Activated CD4-positive, alpha-beta T cell treated with anti-CD3 and anti-CD28 coated beads for 36 hours (primary cell): ENCODE measurements at regions of chrX and their contacts with region 1.

Region 1: GRCh38 chrX:45849253-45849862 is 648.7 kb upstream of the DIPK2B start:
- DNase-seq: peak; percentile 35
- ATAC-seq: no peak
- H3K4me3 Mint-ChIP-seq: peak overlapping the region; percentile 99
- H3K27ac Mint-ChIP-seq: peak overlapping the region; percentile 98
- H3K4me1 Mint-ChIP-seq: peaks cover 39% of the 10 kb centered on the region
- H3K27me3 Mint-ChIP-seq: no peaks in the 10 kb centered on the region

Region 2: GRCh38 chrX:45515262-45516215 is 333.8 kb before region 1 on chrX:
- CTCF ChIA-PET with region 1: no interaction called
- POLR2A ChIA-PET with region 1: no interaction called
- intact Hi-C with region 1: loop called in 1 of 2 experiments (anchors 5 kb)
- DNase-seq: peak; percentile 59
- ATAC-seq: peak; percentile 92
- H3K4me3 Mint-ChIP-seq: peak overlapping the region; percentile 43
- H3K27ac Mint-ChIP-seq: peak overlapping the region; percentile 39
- H3K4me1 Mint-ChIP-seq: peaks cover 23% of the 10 kb centered on the region
- H3K27me3 Mint-ChIP-seq: no peaks in the 10 kb centered on the region

Region 3: GRCh38 chrX:45557390-45557789 is 292.0 kb before region 1 on chrX:
- CTCF ChIA-PET with region 1: no interaction called
- POLR2A ChIA-PET with region 1: no interaction called
- intact Hi-C with region 1: no loop called
- DNase-seq: no peak
- ATAC-seq: no peak
- H3K4me3 Mint-ChIP-seq: no peak overlapping the region
- H3K27ac Mint-ChIP-seq: no peak overlapping the region
- H3K4me1 Mint-ChIP-seq: no peaks in the 10 kb centered on the region
- H3K27me3 Mint-ChIP-seq: no peaks in the 10 kb centered on the region

Region 4: GRCh38 chrX:45769761-45770582 is 79.4 kb before region 1 on chrX:
- CTCF ChIA-PET with region 1: no interaction called
- POLR2A ChIA-PET with region 1: interaction called, 5 read pairs
- intact Hi-C with region 1: loop called (anchors 1 to 2 kb)
- DNase-seq: peak; percentile 60
- ATAC-seq: peak; percentile 63
- H3K4me3 Mint-ChIP-seq: peak overlapping the region; percentile 77
- H3K27ac Mint-ChIP-seq: peak overlapping the region; percentile 98
- H3K4me1 Mint-ChIP-seq: peaks cover 53% of the 10 kb centered on the region
- H3K27me3 Mint-ChIP-seq: no peaks in the 10 kb centered on the region

Region 5: DNA sequence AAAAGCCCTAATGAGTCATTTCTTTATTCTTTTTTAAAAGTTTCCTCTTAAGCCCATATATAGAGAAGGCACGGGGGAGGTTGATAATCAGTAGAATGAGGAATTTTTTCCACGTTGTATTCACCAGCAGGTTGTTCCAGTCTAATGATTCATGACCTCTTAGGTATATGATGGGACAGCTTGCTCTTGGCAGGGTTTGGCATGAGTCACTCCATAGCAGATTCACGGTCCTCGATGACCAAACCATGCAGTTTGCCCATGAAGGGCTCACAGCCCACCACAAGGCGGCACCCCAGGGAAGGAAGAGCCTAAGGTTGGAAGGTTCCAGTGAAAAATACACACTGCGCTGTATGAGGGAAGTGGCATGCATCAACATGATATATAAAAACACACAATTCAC is 24.9 kb before region 1 on chrX:
- CTCF ChIA-PET with region 1: interaction called, 4 read pairs
- POLR2A ChIA-PET with region 1: interaction called, 3 read pairs
- intact Hi-C with region 1: loop called (anchors 1 kb)
- DNase-seq: peak; percentile 78
- ATAC-seq: peak; percentile 96
- H3K4me3 Mint-ChIP-seq: no peak overlapping the region
- H3K27ac Mint-ChIP-seq: peak overlapping the region; percentile 93
- H3K4me1 Mint-ChIP-seq: peaks cover 57% of the 10 kb centered on the region
- H3K27me3 Mint-ChIP-seq: no peaks in the 10 kb centered on the region

Region 6: DNA sequence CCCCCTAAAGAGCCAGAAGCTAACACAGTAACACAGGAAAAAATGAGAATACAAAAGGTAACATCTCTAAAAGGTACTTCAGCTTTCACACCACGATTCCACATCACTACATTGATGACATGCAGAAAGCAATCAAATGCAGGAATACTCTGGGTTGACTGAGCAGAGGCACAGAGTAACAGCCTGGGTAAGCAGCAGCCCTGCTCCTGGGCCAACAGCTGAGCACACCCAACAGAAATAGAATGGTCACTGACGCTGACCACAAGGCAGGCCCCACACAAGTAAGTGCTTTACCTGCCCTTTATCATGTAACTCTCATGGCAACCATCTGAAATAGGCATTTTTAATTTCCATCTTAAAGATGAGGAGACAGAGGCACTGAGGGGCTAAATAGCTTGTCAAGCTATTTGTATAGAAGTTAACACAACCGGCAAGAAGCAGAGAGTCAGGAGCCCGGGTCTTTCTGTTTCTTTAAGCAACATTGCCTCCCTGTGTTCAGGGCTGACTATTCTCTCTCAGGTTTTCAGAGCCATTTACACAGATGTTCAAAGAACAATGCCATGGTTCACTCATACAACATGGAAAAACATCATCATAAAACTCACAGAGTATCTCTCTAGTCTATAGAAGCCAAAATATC is 527.0 kb after region 1 on chrX:
- CTCF ChIA-PET with region 1: no interaction called
- POLR2A ChIA-PET with region 1: no interaction called
- intact Hi-C with region 1: loop called (anchors 2 to 10 kb)
- DNase-seq: peak; percentile 52
- ATAC-seq: peak; percentile 97
- H3K4me3 Mint-ChIP-seq: no peak overlapping the region
- H3K27ac Mint-ChIP-seq: no peak overlapping the region
- H3K4me1 Mint-ChIP-seq: peaks cover 18% of the 10 kb centered on the region
- H3K27me3 Mint-ChIP-seq: no peaks in the 10 kb centered on the region